ENCODE measurements at regions of chr18 and their contacts with region 1.

Region 1: DNA sequence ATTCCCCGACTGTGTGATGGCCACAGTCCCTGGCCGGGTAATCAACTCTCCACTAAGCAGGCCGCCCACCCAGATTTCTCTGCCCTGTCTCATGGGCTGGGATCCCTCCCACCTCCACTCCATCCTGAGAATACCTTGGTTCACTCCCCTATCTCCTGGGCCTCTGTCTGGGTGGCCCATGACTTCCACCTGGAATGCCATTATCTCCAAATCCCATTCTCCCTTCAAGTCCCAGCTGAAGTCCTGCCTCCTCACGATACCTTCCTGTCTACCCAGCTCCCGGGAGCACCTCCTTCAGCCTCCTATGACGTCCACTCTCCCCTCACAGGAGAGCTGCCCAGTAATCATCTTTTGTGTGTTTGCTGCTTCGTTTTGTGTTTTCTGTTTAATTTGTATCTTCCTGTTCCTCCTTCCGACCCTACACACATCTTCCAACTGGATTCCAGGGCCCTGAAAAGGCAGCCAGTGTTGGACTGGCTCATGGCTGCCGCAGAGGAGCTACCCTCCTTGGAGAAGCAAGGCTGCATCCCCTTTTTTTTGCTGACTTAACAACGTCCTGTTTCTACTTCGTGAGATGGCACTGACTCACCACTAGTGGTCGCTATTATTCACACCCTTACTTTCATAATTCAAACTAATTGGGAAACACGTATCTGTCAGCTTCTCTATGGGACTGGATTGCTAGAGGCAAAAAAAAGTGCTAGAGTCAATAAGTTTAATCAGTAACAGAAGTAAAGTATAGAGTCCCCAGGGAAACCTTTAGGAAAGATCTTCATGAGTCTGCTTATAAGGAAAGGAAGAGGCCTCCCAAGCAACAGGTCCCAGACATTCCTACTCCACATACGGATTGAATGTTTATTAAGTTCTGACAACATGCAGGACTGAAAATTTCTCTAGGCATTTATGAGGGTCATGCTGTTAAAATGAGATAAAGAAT is 171.9 kb upstream of the GATA6 start:
- DNase-seq: peak; percentile 70 to 74
- H3K4me3 ChIP-seq: no peak overlapping the region
- H3K4me3 Mint-ChIP-seq: peak overlapping the region; percentile 43
- H3K27ac Mint-ChIP-seq: peak overlapping the region; percentile 96
- H3K4me1 ChIP-seq: peaks cover 97% of the 10 kb centered on the region
- H3K4me1 Mint-ChIP-seq: peaks cover 51% of the 10 kb centered on the region
- H3K27me3 ChIP-seq: no peaks in the 10 kb centered on the region
- H3K27me3 Mint-ChIP-seq: no peaks in the 10 kb centered on the region
- CTCF ChIP-seq: peak; percentile 75 to 78

Region 2: DNA sequence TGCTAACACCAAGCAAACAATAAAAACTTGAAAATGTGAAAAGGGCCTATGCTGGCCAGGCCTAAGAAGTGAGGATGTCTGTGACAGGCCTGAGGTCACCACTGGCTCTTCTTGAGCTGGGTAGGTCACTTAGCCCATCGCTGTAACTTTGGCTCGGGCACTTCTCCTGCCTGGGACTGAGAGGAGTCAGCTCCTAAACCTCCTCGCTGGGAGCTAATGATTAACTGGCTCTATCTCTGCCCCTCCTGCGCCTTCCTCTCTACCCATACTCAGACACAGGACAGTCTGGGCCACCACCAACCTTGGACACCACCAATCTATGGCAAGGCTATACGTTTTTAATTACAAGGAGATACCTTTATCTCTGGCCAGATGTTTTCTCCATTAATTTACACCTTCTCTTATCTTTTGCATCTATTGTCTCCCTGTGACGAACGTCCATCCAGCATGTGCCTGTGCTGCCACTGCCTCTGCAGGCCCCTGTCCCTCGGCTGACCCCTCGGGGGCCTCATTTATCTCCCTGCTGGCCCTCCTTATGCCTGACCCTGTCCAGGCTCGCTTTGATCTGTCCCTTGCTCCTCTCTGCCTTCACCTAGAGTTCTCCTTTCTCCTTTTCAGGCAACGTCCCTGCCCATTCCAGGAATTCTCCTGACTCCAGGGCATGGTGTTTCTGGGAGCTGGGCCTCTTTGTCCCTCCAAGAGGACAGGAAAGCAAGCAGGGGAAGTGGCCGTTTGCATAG is 22.8 kb after region 1 on chr18:
- CTCF ChIA-PET with region 1: interaction called, 21 read pairs
- POLR2A ChIA-PET with region 1: interaction called, 7 read pairs
- intact Hi-C with region 1: loop called (anchors 1 kb)
- DNase-seq: peak; percentile 89 to 97
- H3K4me3 ChIP-seq: no peak overlapping the region
- H3K4me3 Mint-ChIP-seq: peak overlapping the region; percentile 51
- H3K27ac Mint-ChIP-seq: peak overlapping the region; percentile 59
- H3K4me1 ChIP-seq: peaks cover 66% of the 10 kb centered on the region
- H3K4me1 Mint-ChIP-seq: peaks cover 39% of the 10 kb centered on the region
- H3K27me3 ChIP-seq: no peaks in the 10 kb centered on the region
- H3K27me3 Mint-ChIP-seq: no peaks in the 10 kb centered on the region
- CTCF ChIP-seq: no peak

Region 3: GRCh38 chr18:22044474-22045220 is 47.2 kb after region 1 on chr18:
- CTCF ChIA-PET with region 1: interaction called, 8 read pairs
- POLR2A ChIA-PET with region 1: interaction called, 18 read pairs
- intact Hi-C with region 1: loop called (anchors 1 kb)
- DNase-seq: peak; percentile 88 to 94
- H3K4me3 ChIP-seq: peak overlapping the region; percentile 22
- H3K4me3 Mint-ChIP-seq: peak overlapping the region; percentile 71
- H3K27ac Mint-ChIP-seq: peak overlapping the region; percentile 89
- H3K4me1 ChIP-seq: peaks cover 88% of the 10 kb centered on the region
- H3K4me1 Mint-ChIP-seq: peaks cover 79% of the 10 kb centered on the region
- H3K27me3 ChIP-seq: no peaks in the 10 kb centered on the region
- H3K27me3 Mint-ChIP-seq: no peaks in the 10 kb centered on the region
- CTCF ChIP-seq: no peak

Region 4: DNA sequence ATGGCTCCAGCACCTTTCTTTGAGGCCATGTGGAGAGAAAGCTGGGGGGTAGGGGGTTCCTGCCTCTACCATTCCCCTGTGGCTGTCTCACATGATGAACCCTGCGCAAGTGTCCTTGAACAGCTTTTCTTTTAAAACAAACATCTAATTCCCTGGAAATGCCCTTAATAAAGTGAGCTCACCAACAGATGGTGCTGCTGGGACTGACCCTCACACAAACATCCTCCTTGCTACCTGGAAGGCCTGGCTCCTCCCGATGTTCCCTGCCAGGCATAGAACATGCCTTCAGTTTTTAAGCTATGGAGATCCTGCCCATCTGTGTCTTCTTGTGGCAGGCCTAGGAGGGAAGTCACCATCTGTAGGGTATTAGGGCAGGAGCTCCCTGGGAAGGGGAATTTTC is 111.2 kb after region 1 on chr18:
- CTCF ChIA-PET with region 1: interaction called, 4 read pairs
- POLR2A ChIA-PET with region 1: no interaction called
- intact Hi-C with region 1: loop called (anchors 2 kb)
- DNase-seq: peak; percentile 51 to 62
- H3K4me3 ChIP-seq: no peak overlapping the region
- H3K4me3 Mint-ChIP-seq: no peak overlapping the region
- H3K27ac Mint-ChIP-seq: peak overlapping the region; percentile 74
- H3K4me1 ChIP-seq: peaks cover 53% of the 10 kb centered on the region
- H3K4me1 Mint-ChIP-seq: peaks cover 44% of the 10 kb centered on the region
- H3K27me3 ChIP-seq: no peaks in the 10 kb centered on the region
- H3K27me3 Mint-ChIP-seq: no peaks in the 10 kb centered on the region
- CTCF ChIP-seq: peak; percentile 40 to 44

Region 5: GRCh38 chr18:22223254-22223960 is 225.9 kb after region 1 on chr18:
- CTCF ChIA-PET with region 1: no interaction called
- POLR2A ChIA-PET with region 1: no interaction called
- intact Hi-C with region 1: loop called (anchors 10 kb)
- DNase-seq: peak; percentile 65 to 78
- H3K4me3 ChIP-seq: no peak overlapping the region
- H3K4me3 Mint-ChIP-seq: no peak overlapping the region
- H3K27ac Mint-ChIP-seq: peak overlapping the region; percentile 54
- H3K4me1 ChIP-seq: peaks cover 32% of the 10 kb centered on the region
- H3K4me1 Mint-ChIP-seq: peaks cover 28% of the 10 kb centered on the region
- H3K27me3 ChIP-seq: no peaks in the 10 kb centered on the region
- H3K27me3 Mint-ChIP-seq: no peaks in the 10 kb centered on the region
- CTCF ChIP-seq: no peak

Region 6: DNA sequence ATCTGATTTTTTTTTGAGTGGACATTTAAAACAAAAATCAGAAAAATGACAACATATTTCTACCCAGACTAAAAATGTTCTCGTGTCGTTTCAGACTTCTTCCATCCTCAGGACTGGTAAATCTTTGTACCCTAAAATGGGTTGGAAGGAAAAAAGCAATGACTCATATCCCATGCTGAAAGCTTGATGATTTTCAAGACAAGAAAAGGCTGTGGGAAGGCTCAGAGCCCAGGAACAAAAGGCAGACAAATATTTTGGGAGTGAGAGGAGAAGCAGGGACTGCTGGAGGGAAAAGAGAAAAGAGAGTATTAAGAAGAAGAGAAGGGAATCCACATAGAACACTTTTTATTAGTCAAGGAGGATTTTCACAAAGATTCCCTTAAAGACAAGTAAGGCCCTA is 497.3 kb after region 1 on chr18:
- CTCF ChIA-PET with region 1: no interaction called
- POLR2A ChIA-PET with region 1: no interaction called
- intact Hi-C with region 1: loop called (anchors 10 kb)
- DNase-seq: no peak
- H3K4me3 ChIP-seq: no peak overlapping the region
- H3K4me3 Mint-ChIP-seq: no peak overlapping the region
- H3K27ac Mint-ChIP-seq: no peak overlapping the region
- H3K4me1 ChIP-seq: peaks cover 35% of the 10 kb centered on the region
- H3K4me1 Mint-ChIP-seq: peaks cover 39% of the 10 kb centered on the region
- H3K27me3 ChIP-seq: no peaks in the 10 kb centered on the region
- H3K27me3 Mint-ChIP-seq: no peaks in the 10 kb centered on the region
- CTCF ChIP-seq: no peak

Measured in Caco-2 (cell line).